ENCODE measurements at regions of chr12 and their contacts with region 1.

Region 1: DNA sequence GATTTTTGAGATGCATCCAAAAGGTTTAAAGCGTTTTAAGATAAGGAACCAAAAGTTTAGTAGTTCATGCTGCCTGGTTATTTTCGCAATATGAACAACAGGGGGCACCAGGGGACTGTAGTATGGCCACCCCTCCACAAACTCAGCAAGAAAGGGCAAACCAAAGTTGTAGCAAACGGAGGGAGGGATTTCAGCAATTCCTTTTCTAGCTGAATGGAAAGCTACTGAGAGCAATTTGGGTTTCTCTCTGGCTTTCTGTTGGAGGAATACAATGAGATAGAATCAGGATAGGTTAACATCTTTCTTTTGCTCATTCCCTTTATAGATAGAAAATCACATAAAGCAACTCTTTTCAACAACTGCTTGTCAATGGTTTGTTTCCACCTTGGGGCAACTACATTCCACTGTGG is 62.5 kb downstream of the DRAM1 start:
- DNase-seq: peak; percentile 60
- H3K4me3 ChIP-seq: no peak overlapping the region
- H3K27ac ChIP-seq: no peak overlapping the region
- H3K4me1 ChIP-seq: no peaks in the 10 kb centered on the region
- H3K27me3 ChIP-seq: no peaks in the 10 kb centered on the region
- CTCF ChIP-seq: peak; percentile 29

Region 2: GRCh38 chr12:102484428-102484958 is 544.6 kb after region 1 on chr12:
- intact Hi-C with region 1: loop called (anchors 5 kb)
- DNase-seq: peak; percentile 45
- H3K4me3 ChIP-seq: no peak overlapping the region
- H3K27ac ChIP-seq: no peak overlapping the region
- H3K4me1 ChIP-seq: no peaks in the 10 kb centered on the region
- H3K27me3 ChIP-seq: no peaks in the 10 kb centered on the region
- CTCF ChIP-seq: peak; percentile 87

Region 3: GRCh38 chr12:102702447-102703114 is 762.7 kb after region 1 on chr12:
- intact Hi-C with region 1: loop called (anchors 10 kb)
- DNase-seq: no peak
- H3K4me3 ChIP-seq: no peak overlapping the region
- H3K27ac ChIP-seq: no peak overlapping the region
- H3K4me1 ChIP-seq: no peaks in the 10 kb centered on the region
- H3K27me3 ChIP-seq: no peaks in the 10 kb centered on the region
- CTCF ChIP-seq: peak; percentile 24

Region 4: DNA sequence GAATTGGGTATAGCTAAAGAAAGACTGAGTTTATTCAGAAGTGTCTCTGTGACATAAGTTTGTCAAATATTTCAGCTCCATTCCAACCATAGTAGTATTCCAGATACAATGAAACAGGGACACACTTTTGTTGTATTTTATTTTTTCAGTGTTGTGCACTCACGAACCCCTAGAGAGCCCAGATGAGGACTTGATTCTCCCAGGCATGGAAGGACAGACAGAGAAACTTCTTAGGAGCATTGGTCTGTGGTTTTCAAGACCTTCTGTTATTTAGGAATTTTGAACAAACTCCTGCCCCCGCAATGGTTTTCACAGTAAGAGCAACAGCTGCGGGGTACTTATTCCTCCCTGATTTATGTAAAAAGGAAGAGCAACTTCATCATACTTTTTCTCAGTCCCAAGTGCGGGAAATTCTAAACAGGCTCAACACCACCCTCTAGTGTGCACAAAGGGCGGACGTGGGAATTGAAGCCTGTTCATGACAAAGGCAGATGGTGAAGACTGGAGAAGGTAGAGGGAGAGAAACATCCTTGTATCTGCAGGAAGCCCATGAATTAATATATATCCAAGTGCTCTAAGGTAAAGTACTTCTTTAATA is 829.6 kb after region 1 on chr12:
- intact Hi-C with region 1: loop called (anchors 10 kb)
- DNase-seq: peak; percentile 30
- H3K4me3 ChIP-seq: no peak overlapping the region
- H3K27ac ChIP-seq: no peak overlapping the region
- H3K4me1 ChIP-seq: no peaks in the 10 kb centered on the region
- H3K27me3 ChIP-seq: no peaks in the 10 kb centered on the region
- CTCF ChIP-seq: peak; percentile 38

Measured in colonic mucosa (tissue), 4 donors.